ENCODE measurements at regions of chr7 and their contacts with region 1.

Region 1: DNA sequence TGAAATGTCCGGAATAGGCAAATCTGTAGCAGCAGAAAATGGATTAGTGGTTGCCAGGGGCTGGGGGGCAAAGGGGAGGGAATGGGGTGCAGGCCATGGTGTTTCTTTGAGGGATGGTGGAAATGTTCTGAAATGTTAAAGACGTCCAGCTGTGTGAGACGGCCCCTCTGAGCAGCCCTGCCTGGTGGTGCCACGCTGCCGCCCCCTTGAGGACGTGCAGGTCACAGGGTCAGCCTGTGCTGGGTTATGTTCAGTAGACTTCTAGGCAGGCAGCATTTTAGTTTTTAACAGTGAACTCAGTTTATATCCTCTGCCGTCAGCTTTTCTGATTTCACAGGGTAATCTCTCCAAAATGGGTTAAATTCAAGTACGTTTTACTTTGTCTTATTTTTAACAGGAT is 9.4 kb downstream of the NUB1 start:
- DNase-seq: no peak
- H3K4me3 Mint-ChIP-seq: no peak overlapping the region
- H3K27ac Mint-ChIP-seq: no peak overlapping the region
- H3K4me1 Mint-ChIP-seq: peaks cover 8% of the 10 kb centered on the region
- H3K27me3 Mint-ChIP-seq: no peaks in the 10 kb centered on the region
- CTCF ChIP-seq: peak; percentile 19

Region 2: GRCh38 chr7:151327659-151328058 is 23.4 kb before region 1 on chr7:
- CTCF ChIA-PET with region 1: interaction called, 10 read pairs
- POLR2A ChIA-PET with region 1: interaction called, 3 read pairs
- intact Hi-C with region 1: no loop called
- DNase-seq: peak; percentile 36
- H3K4me3 Mint-ChIP-seq: no peak overlapping the region
- H3K27ac Mint-ChIP-seq: no peak overlapping the region
- H3K4me1 Mint-ChIP-seq: no peaks in the 10 kb centered on the region
- H3K27me3 Mint-ChIP-seq: peaks cover 24% of the 10 kb centered on the region
- CTCF ChIP-seq: no peak

Region 3: GRCh38 chr7:151361193-151361959 is 10.3 kb after region 1 on chr7:
- CTCF ChIA-PET with region 1: interaction called, 14 read pairs
- POLR2A ChIA-PET with region 1: interaction called, 3 read pairs
- intact Hi-C with region 1: no loop called
- DNase-seq: no peak
- H3K4me3 Mint-ChIP-seq: no peak overlapping the region
- H3K27ac Mint-ChIP-seq: no peak overlapping the region
- H3K4me1 Mint-ChIP-seq: no peaks in the 10 kb centered on the region
- H3K27me3 Mint-ChIP-seq: no peaks in the 10 kb centered on the region
- CTCF ChIP-seq: no peak

Region 4: GRCh38 chr7:151368136-151368571 is 17.1 kb after region 1 on chr7:
- CTCF ChIA-PET with region 1: interaction called, 15 read pairs
- POLR2A ChIA-PET with region 1: interaction called, 3 read pairs
- intact Hi-C with region 1: no loop called
- DNase-seq: peak; percentile 81
- H3K4me3 Mint-ChIP-seq: no peak overlapping the region
- H3K27ac Mint-ChIP-seq: no peak overlapping the region
- H3K4me1 Mint-ChIP-seq: no peaks in the 10 kb centered on the region
- H3K27me3 Mint-ChIP-seq: no peaks in the 10 kb centered on the region
- CTCF ChIP-seq: peak; percentile 95

Region 5: GRCh38 chr7:151454932-151455530 is 104.0 kb after region 1 on chr7:
- CTCF ChIA-PET with region 1: no interaction called
- POLR2A ChIA-PET with region 1: no interaction called
- intact Hi-C with region 1: no loop called
- DNase-seq: no peak
- H3K4me3 Mint-ChIP-seq: no peak overlapping the region
- H3K27ac Mint-ChIP-seq: no peak overlapping the region
- H3K4me1 Mint-ChIP-seq: peaks cover 9% of the 10 kb centered on the region
- H3K27me3 Mint-ChIP-seq: no peaks in the 10 kb centered on the region
- CTCF ChIP-seq: no peak

Region 6: GRCh38 chr7:151727579-151728285 is 376.7 kb after region 1 on chr7:
- CTCF ChIA-PET with region 1: no interaction called
- POLR2A ChIA-PET with region 1: no interaction called
- intact Hi-C with region 1: no loop called
- DNase-seq: peak; percentile 99
- H3K4me3 Mint-ChIP-seq: no peak overlapping the region
- H3K27ac Mint-ChIP-seq: peak overlapping the region; percentile 43
- H3K4me1 Mint-ChIP-seq: peaks cover 24% of the 10 kb centered on the region
- H3K27me3 Mint-ChIP-seq: no peaks in the 10 kb centered on the region
- CTCF ChIP-seq: no peak

Measured in MCF 10A (cell line).